MCF 10A (cell line): ENCODE measurements at regions of chr12 and their contacts with region 1.

Region 1: DNA sequence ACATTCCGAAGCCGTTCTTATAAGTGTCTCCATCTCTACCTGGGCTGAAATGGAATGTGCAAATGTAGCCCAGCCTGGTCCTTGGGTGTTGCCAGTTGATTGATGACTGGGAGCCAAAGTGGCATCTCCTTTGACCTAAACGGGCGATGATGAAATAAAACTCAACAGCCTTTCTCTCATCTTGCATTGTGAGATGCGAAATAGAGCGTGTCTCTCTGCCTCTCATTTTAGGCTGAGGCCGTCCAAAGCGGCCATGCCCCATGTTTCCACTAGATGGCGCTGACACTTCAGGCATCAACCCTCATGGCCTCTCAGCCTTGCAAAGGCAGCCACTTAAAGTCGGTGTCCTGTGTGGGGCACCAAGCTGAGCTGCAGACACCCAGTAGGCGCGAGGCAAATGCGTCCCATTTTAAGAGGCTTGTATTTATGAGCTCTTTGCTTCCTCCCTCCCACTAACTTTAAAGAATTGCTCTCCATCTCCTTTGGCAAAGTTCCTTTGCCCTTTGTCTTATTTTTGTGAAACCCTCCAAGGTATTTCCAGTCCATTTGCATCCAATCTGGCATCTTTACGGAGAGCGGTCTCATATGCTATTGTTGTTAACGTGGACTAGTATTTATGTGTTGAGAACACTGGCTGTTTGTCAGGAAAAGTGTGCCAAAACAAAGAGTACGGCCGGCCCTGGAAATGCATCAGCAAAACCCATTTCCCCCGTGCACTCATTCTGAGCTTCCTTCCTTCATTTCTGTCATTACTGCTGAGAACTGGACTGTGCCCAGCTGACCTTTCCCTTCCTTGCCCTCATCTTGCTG is 25.0 kb downstream of the GPRC5A start:
- DNase-seq: peak; percentile 83
- H3K4me3 Mint-ChIP-seq: no peak overlapping the region
- H3K27ac Mint-ChIP-seq: no peak overlapping the region
- H3K4me1 Mint-ChIP-seq: no peaks in the 10 kb centered on the region
- H3K27me3 Mint-ChIP-seq: no peaks in the 10 kb centered on the region
- CTCF ChIP-seq: peak; percentile 92

Region 2: GRCh38 chr12:12696562-12697383 is 219.6 kb before region 1 on chr12:
- CTCF ChIA-PET with region 1: no interaction called
- POLR2A ChIA-PET with region 1: no interaction called
- intact Hi-C with region 1: no loop called
- DNase-seq: peak; percentile 86
- H3K4me3 Mint-ChIP-seq: peak overlapping the region; percentile 88
- H3K27ac Mint-ChIP-seq: peak overlapping the region; percentile 99
- H3K4me1 Mint-ChIP-seq: peaks cover 16% of the 10 kb centered on the region
- H3K27me3 Mint-ChIP-seq: no peaks in the 10 kb centered on the region
- CTCF ChIP-seq: no peak

Region 3: DNA sequence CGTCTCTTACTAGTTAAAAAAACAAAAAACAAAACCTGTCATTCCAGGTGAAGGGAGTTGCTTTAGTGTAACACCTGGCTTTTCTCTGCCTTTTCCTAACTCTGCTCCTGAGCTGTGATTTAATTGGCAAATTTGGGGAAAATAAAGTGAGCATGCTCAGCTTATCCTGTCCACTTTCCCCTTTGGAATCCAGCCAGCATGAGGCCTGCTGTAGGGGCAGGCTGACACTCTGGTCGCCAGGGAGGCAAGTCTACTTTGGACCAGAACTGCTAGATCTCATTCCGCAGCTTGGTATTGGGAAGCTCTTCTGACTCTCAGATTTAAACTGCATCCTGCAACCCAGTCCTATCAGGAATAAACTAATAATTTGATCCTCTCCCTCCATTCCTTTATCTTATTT is 169.1 kb before region 1 on chr12:
- CTCF ChIA-PET with region 1: no interaction called
- POLR2A ChIA-PET with region 1: no interaction called
- intact Hi-C with region 1: no loop called
- DNase-seq: no peak
- H3K4me3 Mint-ChIP-seq: no peak overlapping the region
- H3K27ac Mint-ChIP-seq: no peak overlapping the region
- H3K4me1 Mint-ChIP-seq: peaks cover 11% of the 10 kb centered on the region
- H3K27me3 Mint-ChIP-seq: no peaks in the 10 kb centered on the region
- CTCF ChIP-seq: no peak

Region 4: GRCh38 chr12:12872139-12872881 is 44.0 kb before region 1 on chr12:
- CTCF ChIA-PET with region 1: no interaction called
- POLR2A ChIA-PET with region 1: no interaction called
- intact Hi-C with region 1: no loop called
- DNase-seq: peak; percentile 49
- H3K4me3 Mint-ChIP-seq: no peak overlapping the region
- H3K27ac Mint-ChIP-seq: peak overlapping the region; percentile 77
- H3K4me1 Mint-ChIP-seq: peaks cover 32% of the 10 kb centered on the region
- H3K27me3 Mint-ChIP-seq: no peaks in the 10 kb centered on the region
- CTCF ChIP-seq: no peak

Region 5: DNA sequence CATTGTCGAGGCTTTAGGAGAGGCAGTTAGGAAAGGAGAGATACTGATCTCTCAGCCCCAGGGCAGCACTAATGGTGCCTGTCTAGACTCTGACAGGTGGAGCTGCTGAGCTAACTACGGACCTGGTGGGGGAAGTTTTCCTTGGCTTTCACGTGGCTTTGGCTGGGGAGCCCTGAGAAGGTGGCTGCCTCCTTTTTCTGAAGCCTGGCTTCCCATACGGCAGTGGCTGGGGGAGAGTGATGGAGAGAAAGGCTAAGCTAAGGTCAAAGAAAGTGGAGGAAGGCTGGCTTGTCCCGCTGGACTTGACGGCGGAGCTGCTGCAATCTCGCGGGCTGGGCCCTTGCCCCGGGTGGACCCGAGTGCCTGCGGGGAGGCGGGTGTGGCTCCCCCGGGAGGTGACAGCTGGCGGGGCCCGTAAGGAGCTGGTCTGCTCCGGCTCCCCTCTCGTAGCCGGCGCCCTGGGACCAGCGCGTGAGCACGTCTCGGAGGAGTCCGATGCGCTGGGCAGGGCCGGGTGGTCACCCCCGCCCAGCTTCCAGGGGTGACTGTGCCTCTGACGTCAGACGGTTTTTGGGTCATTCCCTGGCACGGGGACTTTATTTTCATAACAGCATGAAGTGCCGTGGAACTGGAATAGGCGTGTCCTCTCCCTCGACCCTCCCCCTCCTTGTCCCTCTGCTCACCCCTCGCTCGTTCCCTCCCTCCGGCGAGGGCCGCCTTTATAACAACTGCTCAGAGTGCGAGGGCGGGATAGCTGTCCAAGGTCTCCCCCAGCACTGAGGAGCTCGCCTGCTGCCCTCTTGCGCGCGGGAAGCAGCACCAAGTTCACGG is 25.3 kb before region 1 on chr12 and contains the start of gene GPRC5A:
- CTCF ChIA-PET with region 1: interaction called, 24 read pairs
- POLR2A ChIA-PET with region 1: no interaction called
- intact Hi-C with region 1: loop called (anchors 1 kb)
- DNase-seq: peak; percentile 97
- H3K4me3 Mint-ChIP-seq: peak within 1 kb of the TSS; percentile 82
- H3K27ac Mint-ChIP-seq: peak within 1 kb of the TSS; percentile 87
- H3K4me1 Mint-ChIP-seq: peaks cover 31% of the 10 kb centered on the region
- H3K27me3 Mint-ChIP-seq: no peaks in the 10 kb centered on the region
- CTCF ChIP-seq: peak; percentile 30
- total RNA-seq, gene GPRC5A: 24.1 and 42.1 TPM in 2 replicates

Region 6: GRCh38 chr12:12927211-12928079 is 11.1 kb after region 1 on chr12:
- CTCF ChIA-PET with region 1: interaction called, 14 read pairs
- POLR2A ChIA-PET with region 1: no interaction called
- intact Hi-C with region 1: no loop called
- DNase-seq: peak; percentile 72
- H3K4me3 Mint-ChIP-seq: peak overlapping the region; percentile 75
- H3K27ac Mint-ChIP-seq: no peak overlapping the region
- H3K4me1 Mint-ChIP-seq: peaks cover 15% of the 10 kb centered on the region
- H3K27me3 Mint-ChIP-seq: no peaks in the 10 kb centered on the region
- CTCF ChIP-seq: no peak

Region 7: GRCh38 chr12:12975322-12976077 is 59.2 kb after region 1 on chr12:
- CTCF ChIA-PET with region 1: interaction called, 150 read pairs
- POLR2A ChIA-PET with region 1: interaction called, 7 read pairs
- intact Hi-C with region 1: no loop called
- DNase-seq: peak; percentile 55
- H3K4me3 Mint-ChIP-seq: no peak overlapping the region
- H3K27ac Mint-ChIP-seq: peak overlapping the region; percentile 85
- H3K4me1 Mint-ChIP-seq: peaks cover 12% of the 10 kb centered on the region
- H3K27me3 Mint-ChIP-seq: no peaks in the 10 kb centered on the region
- CTCF ChIP-seq: peak; percentile 23

Region 8: GRCh38 chr12:13094347-13094746 is 178.0 kb after region 1 on chr12:
- CTCF ChIA-PET with region 1: interaction called, 5 read pairs
- POLR2A ChIA-PET with region 1: no interaction called
- intact Hi-C with region 1: loop called (anchors 1 kb)
- DNase-seq: peak; percentile 40
- H3K4me3 Mint-ChIP-seq: peak overlapping the region; percentile 26
- H3K27ac Mint-ChIP-seq: peak overlapping the region; percentile 80
- H3K4me1 Mint-ChIP-seq: peaks cover 47% of the 10 kb centered on the region
- H3K27me3 Mint-ChIP-seq: no peaks in the 10 kb centered on the region
- CTCF ChIP-seq: no peak

Region 9: DNA sequence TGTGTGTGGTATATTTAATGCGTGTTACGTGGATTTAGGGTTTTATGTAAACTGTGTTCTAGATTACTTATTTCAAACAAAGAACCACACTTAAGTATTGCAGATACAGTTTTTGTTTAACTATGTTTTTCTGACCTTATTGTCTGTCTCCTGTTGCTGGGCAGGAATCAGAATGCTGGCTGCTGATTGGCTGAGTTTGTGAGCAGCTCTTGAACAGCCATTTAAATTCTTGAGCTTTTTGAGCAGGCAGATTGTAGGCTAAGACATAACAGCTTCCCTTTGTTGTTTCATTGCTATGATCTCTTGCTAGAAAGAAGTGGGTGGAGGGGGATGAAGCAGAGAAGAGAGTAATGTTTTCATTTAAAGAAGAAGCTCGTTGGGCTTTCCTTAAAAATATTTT is 1501.4 kb after region 1 on chr12:
- CTCF ChIA-PET with region 1: no interaction called
- POLR2A ChIA-PET with region 1: no interaction called
- intact Hi-C with region 1: no loop called
- DNase-seq: peak; percentile 65
- H3K4me3 Mint-ChIP-seq: no peak overlapping the region
- H3K27ac Mint-ChIP-seq: peak overlapping the region; percentile 59
- H3K4me1 Mint-ChIP-seq: no peaks in the 10 kb centered on the region
- H3K27me3 Mint-ChIP-seq: no peaks in the 10 kb centered on the region
- CTCF ChIP-seq: no peak